Naive thymus-derived CD4-positive, alpha-beta T cell (primary cell): ENCODE measurements at regions of chr2 and their contacts with region 1.

Region 1: DNA sequence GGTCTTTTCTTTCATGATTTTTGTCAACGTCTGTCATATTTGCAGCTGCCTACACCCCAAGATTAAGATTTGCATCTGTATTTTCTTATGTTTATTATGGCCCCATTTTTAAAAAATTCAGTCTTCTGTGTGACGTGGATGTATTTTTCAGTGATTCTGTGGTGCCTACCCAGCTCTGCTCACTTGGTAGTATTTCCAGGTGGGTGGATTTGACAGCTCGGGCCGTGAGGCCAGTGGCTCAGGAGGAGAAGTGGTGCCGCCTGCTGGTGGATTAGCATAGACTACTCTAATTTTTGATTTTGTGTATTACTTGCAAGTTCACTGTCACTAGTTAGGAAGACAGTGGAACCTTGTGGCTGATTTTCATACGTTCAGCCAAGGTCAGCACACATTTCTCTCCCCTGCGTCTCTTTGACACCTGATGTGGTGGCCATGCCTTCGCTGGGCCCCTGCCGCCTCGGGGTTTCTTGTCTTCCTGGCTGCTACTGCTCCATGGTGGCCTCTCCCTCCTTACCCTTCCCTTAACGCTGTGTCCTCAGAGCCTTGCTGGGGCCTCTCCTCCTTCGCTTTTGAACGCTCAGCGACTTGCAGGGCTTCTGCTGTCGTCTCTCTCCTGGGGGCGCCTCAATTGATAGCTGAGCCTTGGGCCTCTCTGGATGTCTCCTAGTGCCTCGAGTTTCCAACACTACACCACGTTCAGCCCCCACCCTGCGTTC is 89.3 kb downstream of the DGKD start:
- DNase-seq: peak; percentile 60 to 89 (median 82)
- ATAC-seq: peak; percentile 96
- H3K4me3 ChIP-seq: no peak overlapping the region
- H3K4me3 Mint-ChIP-seq: peak overlapping the region in 3 of 10 donors; percentile 1 to 51 (median 19)
- H3K27ac ChIP-seq: peak overlapping the region; percentile 30
- H3K27ac Mint-ChIP-seq: peak overlapping the region; percentile 65 to 88 (median 80)
- H3K4me1 ChIP-seq: peaks cover 0 to 3% of the 10 kb centered on the region in 2 donors
- H3K4me1 Mint-ChIP-seq: peaks cover 16 to 42% (median 34%) of the 10 kb centered on the region in 7 donors
- H3K27me3 ChIP-seq: no peaks in the 10 kb centered on the region
- H3K27me3 Mint-ChIP-seq: no peaks in the 10 kb centered on the region

Region 2: DNA sequence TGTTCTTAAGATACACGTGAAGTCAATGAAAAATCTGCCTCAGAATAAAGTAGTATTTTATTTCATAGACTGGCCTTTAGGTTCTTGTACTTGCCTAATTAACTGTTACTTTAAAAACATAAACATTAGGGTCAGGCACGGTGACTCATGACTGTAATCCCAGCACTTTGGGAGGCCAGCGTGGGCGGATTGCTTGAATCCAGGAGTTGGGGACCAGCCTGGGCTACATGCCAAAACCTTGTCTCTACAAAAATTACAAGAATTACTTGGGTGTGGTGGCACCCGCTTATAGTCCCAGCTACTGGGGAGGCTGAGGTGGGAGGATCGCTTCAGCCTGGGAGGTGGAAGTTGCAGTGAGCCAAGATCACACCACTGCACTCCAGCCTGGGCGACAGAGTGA is 589.5 kb before region 1 on chr2:
- CTCF ChIA-PET with region 1: no interaction called
- POLR2A ChIA-PET with region 1: no interaction called
- intact Hi-C with region 1: loop called in 1 of 2 experiments (anchors 10 kb)
- DNase-seq: no peak
- ATAC-seq: no peak
- H3K4me3 ChIP-seq: no peak overlapping the region
- H3K4me3 Mint-ChIP-seq: no peak overlapping the region
- H3K27ac ChIP-seq: no peak overlapping the region
- H3K27ac Mint-ChIP-seq: no peak overlapping the region
- H3K4me1 ChIP-seq: no peaks in the 10 kb centered on the region
- H3K4me1 Mint-ChIP-seq: peaks cover 0 to 5% (median 0%) of the 10 kb centered on the region in 7 donors
- H3K27me3 ChIP-seq: no peaks in the 10 kb centered on the region
- H3K27me3 Mint-ChIP-seq: no peaks in the 10 kb centered on the region

Region 3: DNA sequence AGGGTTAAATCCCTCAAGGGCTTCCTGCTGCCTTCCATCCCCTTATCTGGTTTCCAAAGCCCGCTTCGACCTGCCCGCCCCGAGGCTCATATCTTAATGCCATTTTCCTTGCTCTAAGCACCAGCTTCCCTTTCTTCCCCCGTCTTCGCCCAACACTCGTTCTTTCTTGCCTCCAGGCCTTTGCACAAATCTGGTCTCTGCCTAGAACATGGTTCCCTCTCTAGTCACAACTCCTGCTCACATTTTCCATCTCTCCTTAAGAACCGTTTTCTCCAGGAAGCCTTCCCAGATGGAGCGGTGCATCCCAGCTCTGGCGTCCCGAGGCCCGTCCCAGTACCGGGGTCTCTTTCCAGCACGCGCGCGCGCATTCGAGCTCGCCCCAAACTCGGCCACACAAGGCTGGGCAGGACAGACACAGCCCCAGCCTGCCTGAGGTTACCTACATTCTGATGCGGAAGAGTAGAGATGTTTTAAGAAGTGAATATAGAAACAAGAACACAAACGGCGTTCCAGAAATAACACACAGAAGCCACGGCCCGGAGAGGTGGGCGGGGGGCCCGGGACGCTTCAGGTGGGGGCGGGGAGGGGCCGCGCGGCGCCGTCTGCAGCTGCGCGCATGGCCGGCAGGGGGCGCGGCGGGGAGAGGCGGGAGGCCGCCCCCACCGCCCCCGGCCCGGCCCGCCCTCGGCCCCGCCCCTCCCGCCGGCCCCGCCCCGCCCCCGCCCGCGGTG is 89.7 kb before region 1 on chr2 and contains the start of gene DGKD:
- CTCF ChIA-PET with region 1: interaction called, 10 read pairs
- POLR2A ChIA-PET with region 1: interaction called, 3 read pairs
- intact Hi-C with region 1: loop called (anchors 1 to 5 kb)
- DNase-seq: peak; percentile 42 to 81 (median 69)
- ATAC-seq: peak; percentile 96
- H3K4me3 ChIP-seq: peak within 1 kb of the TSS; percentile 83
- H3K4me3 Mint-ChIP-seq: peak within 1 kb of the TSS; percentile 92 to 98 (median 94)
- H3K27ac ChIP-seq: peak within 1 kb of the TSS; percentile 72
- H3K27ac Mint-ChIP-seq: peak within 1 kb of the TSS; percentile 86 to 96 (median 92)
- H3K4me1 ChIP-seq: peaks cover 36 to 42% of the 10 kb centered on the region in 2 donors
- H3K4me1 Mint-ChIP-seq: peaks cover 57 to 74% (median 67%) of the 10 kb centered on the region in 7 donors
- H3K27me3 ChIP-seq: no peaks in the 10 kb centered on the region
- H3K27me3 Mint-ChIP-seq: no peaks in the 10 kb centered on the region
- total RNA-seq, gene DGKD: 61.6 to 252 (median 213) TPM

Region 4: DNA sequence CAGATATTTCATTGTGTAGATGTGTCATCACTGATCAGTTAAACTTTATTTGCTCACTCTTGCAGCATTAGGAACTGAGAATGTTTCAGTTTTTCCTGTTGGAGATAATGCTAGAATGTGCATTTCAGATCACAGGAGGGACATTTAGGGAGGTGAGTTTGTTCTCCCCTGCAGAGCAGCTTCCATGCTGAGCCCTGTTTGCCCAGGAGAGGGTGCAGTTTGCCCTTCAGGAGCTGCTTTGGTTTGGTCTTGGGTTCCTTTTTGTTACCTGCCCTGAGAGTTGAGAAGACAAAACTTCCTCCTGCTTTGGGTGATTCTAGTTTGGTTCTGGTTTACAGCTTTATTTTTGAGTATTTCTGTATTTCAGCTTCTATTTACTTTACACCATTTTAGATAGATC is 39.4 kb before region 1 on chr2:
- CTCF ChIA-PET with region 1: interaction called, 379 read pairs
- POLR2A ChIA-PET with region 1: interaction called, 19 read pairs
- intact Hi-C with region 1: loop called (anchors 1 kb)
- DNase-seq: peak in 7 of 9 donors; percentile 66 to 82 (median 75)
- ATAC-seq: peak; percentile 77
- H3K4me3 ChIP-seq: no peak overlapping the region
- H3K4me3 Mint-ChIP-seq: peak overlapping the region in 7 of 10 donors; percentile 6 to 52 (median 22)
- H3K27ac ChIP-seq: peak overlapping the region; percentile 27
- H3K27ac Mint-ChIP-seq: peak overlapping the region; percentile 48 to 96 (median 83)
- H3K4me1 ChIP-seq: peaks cover 31 to 61% of the 10 kb centered on the region in 2 donors
- H3K4me1 Mint-ChIP-seq: peaks cover 52 to 91% (median 83%) of the 10 kb centered on the region in 7 donors
- H3K27me3 ChIP-seq: no peaks in the 10 kb centered on the region
- H3K27me3 Mint-ChIP-seq: no peaks in the 10 kb centered on the region

Region 5: DNA sequence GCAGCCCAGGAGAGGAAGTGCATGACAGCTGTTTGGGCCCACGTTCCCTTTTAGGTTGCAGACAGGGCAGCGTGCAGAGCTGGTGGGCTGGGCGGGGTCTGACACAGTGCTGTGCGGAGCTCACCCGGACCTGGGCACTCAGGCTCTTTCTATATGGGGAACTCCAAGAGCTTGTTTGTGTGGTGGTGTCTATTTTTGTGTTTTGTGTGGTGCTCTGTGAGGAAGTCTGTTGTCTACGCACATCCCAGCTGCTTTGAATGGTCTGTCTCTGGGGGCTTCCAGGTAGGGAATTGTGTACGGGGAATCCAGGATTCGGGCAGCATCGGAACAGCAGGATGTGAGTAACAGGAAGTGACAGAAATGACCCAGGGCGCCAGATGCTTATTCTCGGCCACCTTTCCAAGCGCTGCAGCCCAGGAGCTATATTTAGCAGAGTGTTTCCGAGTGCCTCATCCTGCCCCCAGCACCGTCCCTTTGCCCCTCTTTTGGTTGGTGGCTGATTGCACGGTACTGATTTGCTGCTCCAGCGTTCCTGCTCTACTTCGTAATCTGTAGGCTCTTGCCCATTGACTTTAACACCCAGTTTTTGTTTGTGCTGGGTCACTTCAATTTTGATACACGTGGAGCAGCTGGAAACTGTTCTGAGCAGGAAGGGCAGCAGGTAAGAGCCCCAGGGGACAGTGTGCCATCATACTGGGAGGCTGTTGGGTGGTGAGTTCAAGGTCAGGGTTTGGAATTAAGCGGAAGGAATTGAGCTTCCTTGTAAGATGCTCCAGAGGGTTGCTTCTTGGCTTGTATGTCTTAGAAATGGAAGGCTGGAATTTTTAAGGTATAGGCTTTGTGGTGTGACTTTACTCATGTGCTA is 24.6 kb before region 1 on chr2:
- CTCF ChIA-PET with region 1: interaction called, 156 read pairs
- POLR2A ChIA-PET with region 1: interaction called, 127 read pairs
- intact Hi-C with region 1: loop called (anchors 1 kb)
- DNase-seq: peak in 6 of 9 donors; percentile 40 to 69 (median 50)
- ATAC-seq: peak; percentile 74
- H3K4me3 ChIP-seq: peak overlapping the region; percentile 70
- H3K4me3 Mint-ChIP-seq: peak overlapping the region; percentile 84 to 99 (median 92)
- H3K27ac ChIP-seq: peak overlapping the region; percentile 80
- H3K27ac Mint-ChIP-seq: peak overlapping the region; percentile 86 to 99 (median 97)
- H3K4me1 ChIP-seq: peaks cover 65 to 93% of the 10 kb centered on the region in 2 donors
- H3K4me1 Mint-ChIP-seq: peaks cover 78 to 100% (median 96%) of the 10 kb centered on the region in 7 donors
- H3K27me3 ChIP-seq: no peaks in the 10 kb centered on the region
- H3K27me3 Mint-ChIP-seq: no peaks in the 10 kb centered on the region

Region 6: DNA sequence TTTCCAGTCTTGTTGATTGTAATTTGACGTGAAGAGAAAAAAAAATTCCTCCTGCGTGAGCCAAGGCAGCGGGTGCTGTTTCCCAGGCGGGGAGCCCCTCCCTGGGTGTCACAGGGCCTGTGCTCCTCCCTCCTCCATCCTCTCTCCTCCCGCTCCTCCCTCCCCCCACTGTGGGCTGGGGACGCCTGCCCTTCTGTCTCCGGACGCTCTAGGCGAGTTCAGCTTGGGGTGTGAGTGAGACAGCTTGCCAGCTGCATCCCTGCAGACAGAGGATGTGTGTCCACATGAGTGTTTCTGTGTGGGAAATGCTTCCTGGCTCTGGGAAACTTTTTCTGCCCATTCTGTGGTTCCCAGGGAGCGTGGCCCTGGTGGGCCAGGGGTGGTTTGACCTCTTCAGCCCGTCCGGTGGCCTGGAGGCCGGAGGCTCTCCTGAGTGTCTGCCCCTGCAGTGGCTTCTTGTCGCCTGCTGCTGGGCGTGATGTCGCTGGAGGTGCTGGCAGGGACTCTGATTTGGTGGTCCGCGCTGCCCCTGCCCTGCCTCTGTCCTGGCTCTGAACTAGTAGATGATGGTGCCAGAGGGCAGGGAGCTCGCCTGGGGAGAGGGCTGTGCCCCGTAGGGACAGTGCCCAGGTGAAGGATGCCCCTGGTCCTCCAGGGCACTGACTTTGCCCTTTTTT is 26.5 kb after region 1 on chr2:
- CTCF ChIA-PET with region 1: no interaction called
- POLR2A ChIA-PET with region 1: no interaction called
- intact Hi-C with region 1: no loop called
- DNase-seq: no peak
- ATAC-seq: no peak
- H3K4me3 ChIP-seq: no peak overlapping the region
- H3K4me3 Mint-ChIP-seq: no peak overlapping the region
- H3K27ac ChIP-seq: no peak overlapping the region
- H3K27ac Mint-ChIP-seq: peak overlapping the region in 1 of 9 donors; percentile 49
- H3K4me1 ChIP-seq: no peaks in the 10 kb centered on the region
- H3K4me1 Mint-ChIP-seq: no peaks in the 10 kb centered on the region
- H3K27me3 ChIP-seq: no peaks in the 10 kb centered on the region
- H3K27me3 Mint-ChIP-seq: no peaks in the 10 kb centered on the region